Activated naive CD4-positive, alpha-beta T cell treated with anti-CD3 and anti-CD28 coated beads for 36 hours (primary cell): ENCODE measurements at regions of chr7 and their contacts with region 1.

Region 1: DNA sequence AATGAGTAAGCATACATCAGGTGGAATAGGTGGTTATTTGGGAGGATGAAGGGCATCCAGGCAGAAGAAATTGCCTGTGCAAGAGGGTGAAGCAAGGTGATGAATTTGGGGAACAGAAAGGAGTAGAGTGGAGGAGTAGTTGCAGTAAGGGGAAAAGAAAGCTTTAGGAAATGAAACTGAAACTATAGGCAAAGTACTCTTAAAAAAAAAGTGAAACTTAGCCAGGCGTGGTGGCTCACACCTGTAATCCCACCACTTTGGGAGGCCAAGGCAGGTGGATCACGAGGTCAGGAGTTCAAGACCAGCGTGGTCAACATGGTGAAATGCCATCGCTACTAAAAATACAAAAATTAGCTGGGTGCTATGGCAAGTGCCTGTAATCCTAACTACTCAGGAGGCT is 17.6 kb downstream of the NUP205 start:
- DNase-seq: no peak
- H3K4me3 Mint-ChIP-seq: no peak overlapping the region
- H3K27ac Mint-ChIP-seq: peak overlapping the region; percentile 16
- H3K4me1 Mint-ChIP-seq: peaks cover 12% of the 10 kb centered on the region
- H3K27me3 Mint-ChIP-seq: no peaks in the 10 kb centered on the region

Region 2: GRCh38 chr7:135238112-135238744 is 337.1 kb before region 1 on chr7:
- CTCF ChIA-PET with region 1: no interaction called
- intact Hi-C with region 1: no loop called
- DNase-seq: no peak
- H3K4me3 Mint-ChIP-seq: no peak overlapping the region
- H3K27ac Mint-ChIP-seq: no peak overlapping the region
- H3K4me1 Mint-ChIP-seq: peaks cover 4% of the 10 kb centered on the region
- H3K27me3 Mint-ChIP-seq: no peaks in the 10 kb centered on the region

Region 3: GRCh38 chr7:135620980-135621850 is 45.9 kb after region 1 on chr7:
- CTCF ChIA-PET with region 1: interaction called, 3 read pairs
- intact Hi-C with region 1: loop called (anchors 5 kb)
- DNase-seq: peak; percentile 45
- H3K4me3 Mint-ChIP-seq: no peak overlapping the region
- H3K27ac Mint-ChIP-seq: no peak overlapping the region
- H3K4me1 Mint-ChIP-seq: no peaks in the 10 kb centered on the region
- H3K27me3 Mint-ChIP-seq: no peaks in the 10 kb centered on the region